GM12878 (cell line): ENCODE measurements at regions of chr19 and their contacts with region 1.

Region 1: DNA sequence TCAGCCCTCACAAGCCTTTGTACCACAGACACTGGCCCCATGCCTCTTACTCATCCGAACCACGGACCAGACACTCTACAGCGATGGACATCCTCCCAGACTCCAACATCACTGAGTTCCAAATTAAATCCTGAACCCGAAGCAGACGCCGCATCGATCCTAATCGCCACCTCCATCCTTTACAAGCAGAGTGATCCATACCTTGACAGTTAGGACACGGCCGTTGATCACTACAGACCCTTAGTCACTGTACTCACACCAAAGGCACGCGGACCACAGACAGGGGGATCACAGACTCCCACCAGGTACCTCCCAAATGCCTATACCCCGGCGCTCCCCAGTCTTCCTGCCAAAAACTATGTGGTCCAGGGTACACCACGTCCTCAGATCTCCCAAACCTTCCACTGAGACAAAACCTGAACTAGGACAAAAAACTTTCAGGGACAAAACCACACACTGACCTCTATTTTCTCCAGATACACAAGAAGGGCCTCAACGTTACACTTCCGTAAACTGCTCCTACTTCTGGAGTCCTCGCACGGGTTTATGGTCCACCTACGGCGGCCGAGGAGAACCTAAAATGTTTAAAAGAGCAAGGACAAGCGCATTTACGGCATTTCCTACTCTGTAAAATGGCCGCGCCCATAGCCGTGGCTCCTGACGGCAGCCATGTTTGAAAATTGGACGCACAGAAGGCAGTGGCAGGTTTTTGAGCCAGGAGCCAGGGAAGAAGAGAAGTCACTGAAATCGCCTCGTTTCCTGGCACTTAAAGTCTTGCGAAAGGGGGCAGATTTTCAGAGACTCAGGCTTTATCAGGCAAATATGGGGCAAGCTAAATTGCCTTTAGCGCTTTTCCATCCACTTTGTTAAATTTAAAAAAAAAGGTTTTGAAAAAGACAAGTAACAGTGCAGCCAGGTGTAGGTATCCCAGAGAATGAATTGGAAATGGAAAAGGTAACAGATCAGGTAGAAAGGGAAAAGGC is at the start of gene ZNF350:
- DNase-seq: peak; percentile 84
- ATAC-seq: peak; percentile 98
- H3K4me3 ChIP-seq: peak within 1 kb of the TSS; percentile 94
- H3K27ac ChIP-seq: peak within 1 kb of the TSS; percentile 85
- H3K4me1 ChIP-seq: no peaks in the 10 kb centered on the region
- H3K27me3 ChIP-seq: no peaks in the 10 kb centered on the region
- CTCF ChIP-seq: no peak
- EP300 ChIP-seq: no peak
- POLR2A ChIP-seq: peak; percentile 67
- RAD21 ChIP-seq: no peak
- polyA plus RNA-seq, gene ZNF350: 9.8 to 10.9 TPM

Region 2: GRCh38 chr19:51915324-51915867 is 71.2 kb before region 1 on chr19:
- CTCF ChIA-PET with region 1: no interaction called
- POLR2A ChIA-PET with region 1: no interaction called
- RAD21 ChIA-PET with region 1: no interaction called
- SMC1A ChIA-PET with region 1: no interaction called
- in situ Hi-C with region 1: no loop called
- intact Hi-C with region 1: no loop called
- DNase-seq: no peak
- ATAC-seq: no peak
- H3K4me3 ChIP-seq: no peak overlapping the region
- H3K27ac ChIP-seq: no peak overlapping the region
- H3K4me1 ChIP-seq: no peaks in the 10 kb centered on the region
- H3K27me3 ChIP-seq: no peaks in the 10 kb centered on the region
- CTCF ChIP-seq: no peak
- EP300 ChIP-seq: no peak
- POLR2A ChIP-seq: no peak
- RAD21 ChIP-seq: no peak

Region 3: GRCh38 chr19:51926784-51927742 is 59.5 kb before region 1 on chr19 and contains the start of gene ZNF613:
- CTCF ChIA-PET with region 1: no interaction called
- POLR2A ChIA-PET with region 1: no interaction called
- RAD21 ChIA-PET with region 1: no interaction called
- SMC1A ChIA-PET with region 1: no interaction called
- in situ Hi-C with region 1: no loop called
- intact Hi-C with region 1: loop called (anchors 2 kb)
- DNase-seq: peak; percentile 89
- ATAC-seq: peak; percentile 97
- H3K4me3 ChIP-seq: peak within 1 kb of the TSS; percentile 77
- H3K27ac ChIP-seq: peak within 1 kb of the TSS; percentile 70
- H3K4me1 ChIP-seq: 0 out of 2 replicates have a peak, but pooled peaks cover 2% of the 10 kb centered on the region
- H3K27me3 ChIP-seq: no peaks in the 10 kb centered on the region
- CTCF ChIP-seq: peak in 2 of 3 experiments; percentile 5 to 22; a peak in 1 of 6 replicates
- EP300 ChIP-seq: no peak
- POLR2A ChIP-seq: peak; percentile 24
- RAD21 ChIP-seq: no peak
- polyA plus RNA-seq, gene ZNF613: 3.3 to 5.1 TPM

Region 4: DNA sequence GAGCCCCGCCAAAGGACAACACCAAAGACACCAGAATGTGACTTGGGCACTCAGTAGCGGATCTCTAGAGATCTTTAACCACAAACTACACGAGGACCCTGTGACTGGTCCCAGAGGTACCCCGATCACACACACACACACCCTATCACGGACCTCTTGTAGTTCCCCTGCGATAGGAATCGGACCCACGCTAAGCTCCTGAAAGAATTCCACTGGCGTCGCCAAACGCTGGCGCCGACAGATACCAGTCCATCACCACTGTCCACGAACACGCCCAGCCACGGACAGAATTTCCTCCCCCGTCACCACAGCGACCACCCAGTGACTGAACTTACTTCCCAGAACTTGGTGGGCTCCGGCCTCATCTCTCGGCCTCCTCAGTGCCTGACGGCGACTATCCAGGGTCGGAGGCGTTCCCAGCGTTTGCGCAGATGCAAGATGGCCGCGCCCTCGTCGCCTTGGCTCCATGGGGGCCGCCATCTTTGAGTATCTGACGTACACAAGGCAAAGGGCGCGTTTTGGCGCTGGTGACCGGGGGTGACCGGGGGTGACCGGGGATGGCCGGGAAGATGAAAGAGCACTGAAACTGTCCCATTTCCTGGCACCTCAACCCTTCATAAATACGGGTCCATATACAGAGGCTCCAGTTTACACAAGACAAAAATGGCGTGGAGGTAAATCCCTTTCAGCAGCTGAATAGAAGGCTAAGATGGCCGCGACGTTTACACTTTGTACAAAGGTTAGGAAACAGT is 21.4 kb after region 1 on chr19 and contains the start of gene ZNF615:
- CTCF ChIA-PET with region 1: interaction called, 3 read pairs
- POLR2A ChIA-PET with region 1: no interaction called
- RAD21 ChIA-PET with region 1: no interaction called
- SMC1A ChIA-PET with region 1: no interaction called
- in situ Hi-C with region 1: no loop called
- intact Hi-C with region 1: loop called (anchors 1 kb)
- DNase-seq: peak; percentile 47
- ATAC-seq: peak; percentile 99
- H3K4me3 ChIP-seq: peak within 1 kb of the TSS; percentile 77
- H3K27ac ChIP-seq: peak within 1 kb of the TSS; percentile 90
- H3K4me1 ChIP-seq: no peaks in the 10 kb centered on the region; the same call in 1 of the 2 replicates
- H3K27me3 ChIP-seq: no peaks in the 10 kb centered on the region
- CTCF ChIP-seq: no peak
- EP300 ChIP-seq: no peak
- POLR2A ChIP-seq: peak; percentile 72
- RAD21 ChIP-seq: no peak
- polyA plus RNA-seq, gene ZNF615: 1.7 to 2.1 TPM

Region 5: DNA sequence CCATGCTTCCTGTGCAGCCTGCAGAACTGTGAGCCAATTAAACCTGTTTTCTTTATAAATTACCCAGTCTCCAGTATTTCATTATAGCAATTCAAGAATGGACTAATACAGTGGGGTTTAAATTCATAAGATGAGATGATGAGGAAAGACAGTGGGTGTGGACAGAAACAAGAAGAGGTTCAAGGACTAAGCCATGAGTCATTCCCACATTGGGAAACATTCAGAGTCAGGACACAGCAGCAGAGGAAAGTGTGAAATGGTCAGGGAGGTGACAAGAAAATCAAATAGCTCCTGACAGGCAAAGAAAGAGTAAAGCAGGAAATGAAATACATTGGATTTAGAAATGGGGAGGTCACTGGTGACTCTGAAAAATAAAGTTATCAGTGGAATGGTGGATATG is 99.9 kb after region 1 on chr19:
- CTCF ChIA-PET with region 1: no interaction called
- POLR2A ChIA-PET with region 1: no interaction called
- RAD21 ChIA-PET with region 1: no interaction called
- SMC1A ChIA-PET with region 1: no interaction called
- in situ Hi-C with region 1: no loop called
- intact Hi-C with region 1: no loop called
- DNase-seq: no peak
- ATAC-seq: no peak
- H3K4me3 ChIP-seq: no peak overlapping the region
- H3K27ac ChIP-seq: no peak overlapping the region
- H3K4me1 ChIP-seq: no peaks in the 10 kb centered on the region
- H3K27me3 ChIP-seq: no peaks in the 10 kb centered on the region
- CTCF ChIP-seq: no peak
- EP300 ChIP-seq: no peak
- POLR2A ChIP-seq: no peak
- RAD21 ChIP-seq: no peak